ENCODE measurements at regions of chr1 and their contacts with region 1.

Region 1: GRCh38 chr1:20640183-20640597 is 6.9 kb downstream of the PINK1 start:
- DNase-seq: peak; percentile 38 to 82
- ATAC-seq: peak; percentile 77 to 92 (median 81)
- H3K4me3 ChIP-seq: no peak overlapping the region
- H3K4me3 Mint-ChIP-seq: no peak overlapping the region
- H3K27ac ChIP-seq: no peak overlapping the region
- H3K27ac Mint-ChIP-seq: peak overlapping the region in 1 of 2 donors; percentile 34
- H3K4me1 ChIP-seq: no peaks in the 10 kb centered on the region
- H3K4me1 Mint-ChIP-seq: peaks cover 7 to 13% of the 10 kb centered on the region in 2 donors
- H3K27me3 ChIP-seq: no peaks in the 10 kb centered on the region
- H3K27me3 Mint-ChIP-seq: no peaks in the 10 kb centered on the region
- CTCF ChIP-seq: peak; percentile 90

Region 2: GRCh38 chr1:20521960-20522861 is 118.0 kb before region 1 on chr1:
- intact Hi-C with region 1: loop called (anchors 1 kb)
- DNase-seq: peak; percentile 45 to 80
- ATAC-seq: peak; percentile 59 to 74 (median 64)
- H3K4me3 ChIP-seq: no peak overlapping the region
- H3K4me3 Mint-ChIP-seq: no peak overlapping the region
- H3K27ac ChIP-seq: no peak overlapping the region
- H3K27ac Mint-ChIP-seq: no peak overlapping the region
- H3K4me1 ChIP-seq: no peaks in the 10 kb centered on the region
- H3K4me1 Mint-ChIP-seq: peaks cover 0 to 5% of the 10 kb centered on the region in 2 donors
- H3K27me3 ChIP-seq: no peaks in the 10 kb centered on the region
- H3K27me3 Mint-ChIP-seq: peaks cover 6 to 17% of the 10 kb centered on the region in 2 donors
- CTCF ChIP-seq: peak; percentile 88

Region 3: DNA sequence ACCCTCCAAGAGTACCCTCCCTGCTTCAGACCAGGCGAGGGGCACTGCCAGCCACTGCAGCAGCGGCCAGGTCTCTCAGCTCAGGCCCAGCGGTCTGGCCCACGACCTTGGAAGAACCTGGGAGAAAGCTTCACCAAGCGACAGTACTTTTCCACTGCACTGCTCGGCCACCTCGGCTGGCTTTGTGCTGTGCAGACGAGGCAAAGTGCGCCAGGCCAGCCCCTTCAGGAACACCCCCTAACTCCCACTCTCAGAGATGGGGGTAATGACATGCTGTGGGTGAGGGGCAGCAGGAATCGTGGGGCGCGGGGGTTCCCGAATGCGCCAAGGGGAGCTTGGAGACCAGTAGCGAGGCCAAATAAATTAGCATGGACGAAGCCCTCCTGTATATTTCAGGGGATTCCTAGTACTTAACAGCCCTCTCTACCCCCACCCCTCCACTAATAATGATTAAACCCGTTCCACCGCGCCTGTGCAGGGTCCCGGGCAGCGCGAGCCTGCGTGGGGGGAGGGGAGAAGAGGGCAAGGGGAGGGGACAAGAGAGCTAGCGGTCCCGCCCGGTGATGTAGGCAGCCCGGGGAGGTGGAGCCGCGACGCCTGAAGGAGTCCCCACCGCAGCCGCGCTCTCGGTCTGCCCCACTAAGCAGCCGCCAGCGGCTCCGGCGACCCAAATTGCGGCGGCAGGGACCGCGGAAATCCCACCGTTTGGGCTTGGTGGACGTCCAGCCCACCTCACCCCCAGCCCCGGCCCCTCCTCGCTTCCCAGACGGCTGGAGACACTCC is 88.1 kb before region 1 on chr1 and contains the start of gene FAM43B:
- intact Hi-C with region 1: no loop called
- DNase-seq: no peak
- ATAC-seq: no peak
- H3K4me3 ChIP-seq: no peak within 1 kb of the TSS
- H3K4me3 Mint-ChIP-seq: no peak within 1 kb of the TSS
- H3K27ac ChIP-seq: no peak within 1 kb of the TSS
- H3K27ac Mint-ChIP-seq: no peak within 1 kb of the TSS
- H3K4me1 ChIP-seq: no peaks in the 10 kb centered on the region
- H3K4me1 Mint-ChIP-seq: no peaks in the 10 kb centered on the region
- H3K27me3 ChIP-seq: peaks cover 15% of the 10 kb centered on the region
- H3K27me3 Mint-ChIP-seq: peaks cover 19% of the 10 kb centered on the region in 2 donors
- CTCF ChIP-seq: no peak
- total RNA-seq, gene FAM43B: not detected

Region 4: DNA sequence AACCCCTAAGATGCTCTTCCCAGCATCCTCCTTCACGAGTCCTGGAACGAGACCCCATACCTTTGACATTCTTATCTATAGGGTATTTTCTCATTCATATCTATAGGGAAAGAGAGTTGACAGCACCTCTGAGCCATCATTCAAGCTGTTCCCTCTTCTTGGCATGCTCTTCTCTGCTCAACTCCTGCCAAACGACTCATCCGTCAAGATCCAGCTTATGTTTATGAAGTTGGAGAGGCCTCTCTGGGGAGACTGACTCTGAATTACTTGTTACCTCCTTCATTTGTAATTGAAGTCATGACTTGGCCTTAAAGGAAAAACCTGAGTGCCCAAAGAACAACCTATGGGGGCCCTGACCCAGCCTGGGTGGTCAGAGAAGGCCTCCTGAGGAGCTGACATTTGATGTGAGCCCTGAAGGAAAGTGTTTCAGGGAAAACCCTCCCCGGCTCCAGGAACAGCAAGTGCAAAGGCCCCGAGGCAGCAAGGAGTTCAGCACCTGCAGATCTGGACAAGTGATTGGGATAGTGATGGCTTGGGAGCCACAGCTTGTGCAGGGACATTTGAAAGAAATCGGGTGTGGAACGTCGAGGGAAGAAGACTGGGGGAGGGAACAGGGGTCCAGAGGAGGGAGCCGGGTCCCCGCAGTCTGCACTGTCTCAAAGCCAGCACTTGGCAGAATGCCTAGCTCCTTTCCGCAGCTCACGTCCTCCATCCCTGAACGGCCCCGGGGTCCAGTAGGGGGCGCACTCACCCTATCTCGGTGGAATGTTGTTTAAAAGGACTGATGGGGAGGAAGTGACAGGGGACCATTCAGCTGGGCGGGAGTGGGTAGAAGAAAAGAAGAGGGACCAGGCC is 65.3 kb before region 1 on chr1:
- intact Hi-C with region 1: loop called (anchors 2 kb)
- DNase-seq: peak; percentile 51 to 69
- ATAC-seq: peak; percentile 38 to 87 (median 64)
- H3K4me3 ChIP-seq: no peak overlapping the region
- H3K4me3 Mint-ChIP-seq: no peak overlapping the region
- H3K27ac ChIP-seq: no peak overlapping the region
- H3K27ac Mint-ChIP-seq: no peak overlapping the region
- H3K4me1 ChIP-seq: no peaks in the 10 kb centered on the region
- H3K4me1 Mint-ChIP-seq: no peaks in the 10 kb centered on the region
- H3K27me3 ChIP-seq: no peaks in the 10 kb centered on the region
- H3K27me3 Mint-ChIP-seq: peaks cover 9 to 20% of the 10 kb centered on the region in 2 donors
- CTCF ChIP-seq: peak; percentile 22

Measured in natural killer cell (primary cell).